Sigmoid colon (tissue), 7 donors: ENCODE measurements at regions of chr16 and their contacts with region 1.

Region 1: DNA sequence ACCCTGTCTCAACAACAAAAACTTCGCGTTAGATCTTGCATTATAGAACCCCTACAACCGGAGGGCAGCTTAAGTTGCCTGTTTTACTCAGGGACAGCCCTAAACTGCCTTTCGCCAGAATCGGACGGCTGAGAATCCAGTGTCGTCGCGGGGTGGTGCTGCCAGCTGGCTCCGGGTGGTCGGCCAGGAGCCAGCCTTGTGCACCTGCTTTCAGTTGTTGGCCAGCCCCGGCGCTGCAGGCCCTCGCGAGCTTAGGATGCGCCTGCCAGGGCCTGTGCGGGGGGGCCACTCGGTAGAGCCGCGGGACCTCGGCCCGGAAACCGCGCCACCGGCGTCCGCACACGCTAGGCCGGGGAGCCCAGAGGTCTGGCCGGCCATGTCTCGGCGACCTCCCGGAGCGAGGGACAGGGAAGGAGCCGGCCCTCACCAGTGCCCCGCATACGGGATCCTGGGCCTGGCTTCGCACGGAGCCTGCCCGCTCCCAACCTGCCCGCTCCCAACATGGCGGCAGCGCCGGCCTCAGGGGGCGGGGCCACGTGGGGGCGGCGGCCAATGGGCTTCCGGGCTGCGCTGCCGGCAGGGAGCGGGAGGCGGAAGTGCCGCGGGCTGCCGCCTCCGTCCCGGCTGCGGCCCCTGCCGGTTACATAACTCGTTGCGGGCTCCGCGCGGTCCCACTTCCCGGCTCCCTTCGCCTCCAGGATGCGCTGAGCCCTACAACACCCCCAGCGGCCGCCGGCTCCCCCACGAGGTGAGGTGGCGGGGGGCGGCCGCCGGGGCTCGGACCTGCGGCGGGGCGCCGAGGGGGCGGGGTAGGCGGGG is 14.2 kb downstream of the NAA60 start:
- DNase-seq: peak; percentile 96
- H3K4me3 ChIP-seq: peak overlapping the region; percentile 82 to 93 (median 84)
- H3K27ac ChIP-seq: peak overlapping the region; percentile 89 to 97 (median 94)
- H3K4me1 ChIP-seq: peaks cover 0 to 50% (median 42%) of the 10 kb centered on the region in 4 donors
- H3K27me3 ChIP-seq: no peaks in the 10 kb centered on the region
- CTCF ChIP-seq: peak in 2 of 4 experiments; percentile 19 to 46
- EP300 ChIP-seq: no peak
- POLR2A ChIP-seq: peak in 1 of 2 donors; percentile 37

Region 2: DNA sequence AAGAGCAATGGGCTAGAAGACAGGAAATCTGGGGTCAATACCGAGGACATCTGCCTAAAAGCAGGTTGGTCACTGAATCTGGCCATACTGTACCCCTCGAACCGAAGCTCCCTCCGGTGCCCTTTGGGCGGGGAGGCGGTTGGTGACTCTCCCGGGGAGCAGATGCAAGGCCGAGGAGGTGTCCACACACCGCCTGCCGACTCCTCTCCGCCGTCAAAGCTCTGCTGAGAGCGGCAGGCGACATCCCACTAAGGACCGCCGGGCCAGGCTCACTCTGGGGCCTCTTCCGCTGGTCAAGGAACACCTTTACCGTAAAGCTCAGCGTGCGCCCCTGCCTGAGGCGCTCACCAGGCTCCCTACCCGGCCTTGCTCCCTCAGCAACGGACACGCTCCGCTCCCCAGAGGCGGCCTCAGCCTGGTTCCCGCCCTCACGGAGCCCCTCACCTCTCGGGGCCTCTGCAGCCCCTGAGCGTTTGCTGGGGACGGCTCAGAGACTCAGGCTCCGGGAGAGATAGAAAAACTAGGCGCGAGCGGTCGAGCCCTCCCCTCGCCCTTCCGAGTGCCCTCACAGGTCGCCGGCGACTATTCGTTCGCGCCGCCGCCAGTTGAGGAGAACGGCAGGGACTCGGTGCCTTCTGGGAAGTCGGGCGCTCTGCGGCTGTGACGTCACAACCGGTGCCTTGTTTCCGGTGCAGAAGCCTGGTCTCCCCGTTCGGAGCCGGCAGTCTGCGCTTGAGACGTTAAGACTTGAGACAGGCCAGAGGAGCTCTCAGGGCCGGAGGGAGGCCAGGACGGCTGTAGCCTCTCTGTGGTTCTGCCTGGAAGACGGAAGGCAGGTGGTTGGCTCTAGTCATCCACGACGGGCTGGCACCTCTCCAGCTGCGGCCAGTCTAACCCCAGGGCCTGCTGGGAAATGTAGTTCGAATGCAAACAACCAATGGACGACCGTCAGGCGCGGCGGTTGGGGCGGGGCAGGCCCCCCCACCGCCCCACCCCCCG is 222.8 kb before region 1 on chr16 and contains the start of gene ZNF200:
- intact Hi-C with region 1: loop called (anchors 5 kb)
- DNase-seq: peak; percentile 99
- H3K4me3 ChIP-seq: peak within 1 kb of the TSS; percentile 76 to 90 (median 86)
- H3K27ac ChIP-seq: peak within 1 kb of the TSS; percentile 94 to 98 (median 96)
- H3K4me1 ChIP-seq: peaks cover 0 to 15% (median 13%) of the 10 kb centered on the region in 4 donors
- H3K27me3 ChIP-seq: no peaks in the 10 kb centered on the region
- CTCF ChIP-seq: no peak
- EP300 ChIP-seq: peak in 1 of 4 donors; percentile 4
- POLR2A ChIP-seq: peak; percentile 10 to 36
- total RNA-seq, gene ZNF200: 5.5 to 6.8 (median 6.2) TPM

Region 3: GRCh38 chr16:3264137-3265036 is 193.3 kb before region 1 on chr16:
- intact Hi-C with region 1: loop called (anchors 10 kb)
- DNase-seq: peak; percentile 99
- H3K4me3 ChIP-seq: peak overlapping the region; percentile 60 to 98 (median 86)
- H3K27ac ChIP-seq: peak overlapping the region; percentile 90 to 100 (median 97)
- H3K4me1 ChIP-seq: peaks cover 0 to 21% (median 20%) of the 10 kb centered on the region in 4 donors
- H3K27me3 ChIP-seq: no peaks in the 10 kb centered on the region
- CTCF ChIP-seq: peak in 2 of 4 experiments; percentile 13 to 18
- EP300 ChIP-seq: no peak
- POLR2A ChIP-seq: peak; percentile 87 to 91

Region 4: GRCh38 chr16:3503523-3503922 is 45.9 kb after region 1 on chr16:
- intact Hi-C with region 1: loop called (anchors 1 kb)
- DNase-seq: peak; percentile 37
- H3K4me3 ChIP-seq: no peak overlapping the region
- H3K27ac ChIP-seq: no peak overlapping the region
- H3K4me1 ChIP-seq: peaks cover 0 to 23% (median 17%) of the 10 kb centered on the region in 4 donors
- H3K27me3 ChIP-seq: no peaks in the 10 kb centered on the region
- CTCF ChIP-seq: no peak
- EP300 ChIP-seq: no peak
- POLR2A ChIP-seq: no peak